ENCODE measurements at regions of chr2 and their contacts with region 1.

Region 1: DNA sequence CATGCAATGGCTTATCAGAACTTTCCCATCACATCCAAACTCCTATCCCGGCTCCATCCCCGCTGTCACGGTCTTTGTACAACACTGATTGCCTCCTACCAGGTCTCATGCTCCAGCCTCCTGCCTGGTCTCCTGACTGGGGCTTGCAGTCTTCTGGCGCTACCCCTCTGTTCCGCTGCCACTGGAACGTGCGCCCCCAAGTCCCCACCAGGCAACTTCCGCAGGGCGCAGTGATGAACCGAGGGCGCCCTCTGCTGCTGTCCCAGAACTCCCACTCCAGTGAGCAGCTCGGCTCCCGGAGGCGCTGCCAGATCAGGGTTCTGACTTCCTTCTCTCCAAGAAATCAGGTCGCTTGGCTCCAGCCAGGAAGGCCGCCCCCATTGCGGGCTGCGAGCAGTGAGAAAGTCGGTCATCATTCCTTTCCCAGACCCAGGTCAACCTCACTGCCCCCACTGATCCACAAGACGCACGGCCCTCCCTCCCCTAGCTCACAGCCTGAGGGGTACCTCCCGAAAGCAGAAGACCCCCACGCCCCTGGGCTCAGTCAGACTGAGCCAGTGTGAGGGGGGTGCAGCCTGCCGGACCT is 43.9 kb upstream of the RAB11FIP5 start:
- DNase-seq: peak; percentile 62
- ATAC-seq: peak; percentile 99
- H3K4me3 ChIP-seq: no peak overlapping the region
- H3K27ac ChIP-seq: no peak overlapping the region
- H3K4me1 ChIP-seq: no peaks in the 10 kb centered on the region
- H3K27me3 ChIP-seq: peaks cover 21% of the 10 kb centered on the region
- CTCF ChIP-seq: peak; percentile 91
- POLR2A ChIP-seq: no peak
- RAD21 ChIP-seq: peak; percentile 96

Region 2: DNA sequence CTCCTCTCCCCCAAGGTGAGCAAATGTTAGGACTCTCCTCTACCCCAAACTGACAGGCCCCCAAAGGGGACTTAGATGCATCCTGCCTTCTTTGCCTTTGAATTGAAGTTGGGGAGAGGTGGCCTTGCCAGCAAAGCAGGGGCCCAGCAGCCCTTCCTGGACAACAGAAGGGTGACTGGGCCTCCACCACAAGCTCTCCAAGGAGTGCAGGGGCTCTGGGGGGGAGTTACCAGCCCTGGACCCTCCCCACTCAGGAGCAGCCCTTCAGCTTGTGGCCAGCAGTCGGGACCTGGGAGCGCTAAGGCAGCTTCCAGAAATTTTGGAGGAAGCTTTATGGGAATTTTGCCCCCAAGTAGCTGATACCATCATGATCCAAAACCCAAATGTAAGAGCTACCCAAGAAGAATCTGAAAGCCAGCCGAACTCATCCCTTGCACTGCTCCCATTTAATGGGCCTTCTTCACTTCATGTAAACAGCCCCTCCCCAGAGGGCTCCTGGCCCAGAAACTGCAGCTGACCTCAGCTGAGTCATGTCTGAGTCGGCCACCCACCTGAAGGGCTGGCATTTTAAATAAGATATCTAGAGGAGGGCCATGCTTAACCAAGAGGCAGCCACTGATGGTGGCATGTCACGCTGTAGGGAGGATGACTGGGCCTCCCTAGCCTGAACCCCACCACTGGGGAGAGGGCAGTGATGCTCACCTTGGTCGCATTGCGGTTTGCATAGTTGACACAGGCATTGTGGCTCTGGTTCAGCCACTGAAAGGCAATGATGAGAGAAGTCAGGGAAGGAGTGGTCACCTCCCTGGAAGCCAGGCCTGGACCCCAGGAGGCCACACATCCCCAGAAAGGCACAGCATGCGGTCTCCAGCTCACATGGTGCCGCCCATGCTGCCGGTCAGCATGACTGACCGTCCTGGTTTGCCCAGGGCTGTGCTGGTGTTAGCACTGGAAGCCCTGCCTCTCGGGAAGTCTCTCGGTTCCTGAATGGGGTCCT is 156.6 kb before region 1 on chr2:
- CTCF ChIA-PET with region 1: no interaction called
- POLR2A ChIA-PET with region 1: no interaction called
- dilution Hi-C with region 1: no loop called
- in situ Hi-C with region 1: loop called (anchors 5 kb)
- intact Hi-C with region 1: no loop called
- DNase-seq: peak; percentile 73
- ATAC-seq: peak; percentile 79
- H3K4me3 ChIP-seq: no peak overlapping the region
- H3K27ac ChIP-seq: no peak overlapping the region
- H3K4me1 ChIP-seq: peaks cover 10% of the 10 kb centered on the region
- H3K27me3 ChIP-seq: no peaks in the 10 kb centered on the region
- CTCF ChIP-seq: no peak
- POLR2A ChIP-seq: no peak
- RAD21 ChIP-seq: no peak

Region 3: DNA sequence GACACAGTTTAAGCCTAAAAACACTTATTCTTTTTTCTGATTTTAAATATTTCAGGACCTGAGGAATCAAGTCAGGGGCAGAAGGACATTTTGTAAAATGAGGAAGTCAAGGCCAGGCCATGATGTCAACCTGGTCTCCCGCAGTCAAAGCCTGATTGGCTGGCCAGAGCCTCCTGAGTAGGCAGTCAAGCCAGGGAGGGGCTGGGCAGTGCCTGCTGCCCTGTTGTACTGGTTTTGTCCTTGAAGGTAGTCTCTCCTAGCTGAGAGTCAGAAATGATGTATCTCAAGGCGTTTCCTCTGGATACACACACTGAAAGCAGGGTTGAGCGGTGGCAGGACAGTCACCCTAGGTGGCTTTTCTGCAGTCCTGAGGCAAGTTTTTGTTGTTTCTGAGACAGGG is 97.3 kb after region 1 on chr2:
- CTCF ChIA-PET with region 1: no interaction called
- POLR2A ChIA-PET with region 1: no interaction called
- dilution Hi-C with region 1: no loop called
- in situ Hi-C with region 1: no loop called
- intact Hi-C with region 1: no loop called
- DNase-seq: no peak
- ATAC-seq: no peak
- H3K4me3 ChIP-seq: no peak overlapping the region
- H3K27ac ChIP-seq: no peak overlapping the region
- H3K4me1 ChIP-seq: peaks cover 2% of the 10 kb centered on the region; the same call in 1 of the 2 replicates
- H3K27me3 ChIP-seq: no peaks in the 10 kb centered on the region
- CTCF ChIP-seq: no peak
- POLR2A ChIP-seq: no peak
- RAD21 ChIP-seq: no peak